RWPE1 (cell line): ENCODE measurements at regions of chr9 and their contacts with region 1.

Region 1: DNA sequence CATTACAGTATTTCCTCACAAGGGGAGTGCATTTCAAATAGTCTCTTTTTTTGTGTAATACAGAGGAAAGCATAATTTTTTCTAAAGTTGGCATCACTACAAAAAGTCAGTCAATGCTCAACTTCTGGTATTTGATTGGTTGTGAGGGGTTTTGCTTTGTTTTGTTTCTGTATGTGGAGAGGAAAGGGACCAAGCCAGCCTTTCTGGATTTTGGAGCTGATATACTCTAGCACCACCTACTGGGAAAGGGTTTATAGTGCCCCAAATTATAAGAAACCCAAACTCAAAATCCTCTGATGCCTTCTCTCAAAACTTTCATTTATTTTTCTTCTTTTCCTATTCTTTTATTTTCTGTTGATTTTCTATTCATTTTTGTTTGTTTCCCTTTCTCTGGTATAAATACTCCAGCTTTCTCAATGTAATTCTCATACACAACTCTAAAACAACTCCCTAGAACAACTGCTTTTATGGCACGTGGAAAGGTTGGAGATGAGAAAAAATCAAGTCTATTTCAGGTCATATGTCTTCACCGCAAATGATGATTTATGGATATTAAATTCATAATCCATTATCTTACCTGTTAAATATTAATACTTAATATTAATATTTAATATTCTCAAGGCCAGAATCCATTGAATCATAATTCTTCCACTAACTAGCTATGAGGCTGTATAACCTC is 69.5 kb upstream of the ANXA1 start:
- DNase-seq: peak; percentile 57
- H3K27ac ChIP-seq: no peak overlapping the region
- CTCF ChIP-seq: peak; percentile 83

Region 2: GRCh38 chr9:72856972-72857623 is 225.0 kb before region 1 on chr9:
- CTCF ChIA-PET with region 1: interaction called, 12 read pairs
- POLR2A ChIA-PET with region 1: no interaction called
- DNase-seq: peak; percentile 44
- H3K27ac ChIP-seq: no peak overlapping the region
- CTCF ChIP-seq: peak; percentile 67

Region 3: GRCh38 chr9:73011181-73011750 is 70.9 kb before region 1 on chr9:
- CTCF ChIA-PET with region 1: no interaction called
- POLR2A ChIA-PET with region 1: no interaction called
- DNase-seq: no peak
- H3K27ac ChIP-seq: no peak overlapping the region
- CTCF ChIP-seq: no peak

Region 4: DNA sequence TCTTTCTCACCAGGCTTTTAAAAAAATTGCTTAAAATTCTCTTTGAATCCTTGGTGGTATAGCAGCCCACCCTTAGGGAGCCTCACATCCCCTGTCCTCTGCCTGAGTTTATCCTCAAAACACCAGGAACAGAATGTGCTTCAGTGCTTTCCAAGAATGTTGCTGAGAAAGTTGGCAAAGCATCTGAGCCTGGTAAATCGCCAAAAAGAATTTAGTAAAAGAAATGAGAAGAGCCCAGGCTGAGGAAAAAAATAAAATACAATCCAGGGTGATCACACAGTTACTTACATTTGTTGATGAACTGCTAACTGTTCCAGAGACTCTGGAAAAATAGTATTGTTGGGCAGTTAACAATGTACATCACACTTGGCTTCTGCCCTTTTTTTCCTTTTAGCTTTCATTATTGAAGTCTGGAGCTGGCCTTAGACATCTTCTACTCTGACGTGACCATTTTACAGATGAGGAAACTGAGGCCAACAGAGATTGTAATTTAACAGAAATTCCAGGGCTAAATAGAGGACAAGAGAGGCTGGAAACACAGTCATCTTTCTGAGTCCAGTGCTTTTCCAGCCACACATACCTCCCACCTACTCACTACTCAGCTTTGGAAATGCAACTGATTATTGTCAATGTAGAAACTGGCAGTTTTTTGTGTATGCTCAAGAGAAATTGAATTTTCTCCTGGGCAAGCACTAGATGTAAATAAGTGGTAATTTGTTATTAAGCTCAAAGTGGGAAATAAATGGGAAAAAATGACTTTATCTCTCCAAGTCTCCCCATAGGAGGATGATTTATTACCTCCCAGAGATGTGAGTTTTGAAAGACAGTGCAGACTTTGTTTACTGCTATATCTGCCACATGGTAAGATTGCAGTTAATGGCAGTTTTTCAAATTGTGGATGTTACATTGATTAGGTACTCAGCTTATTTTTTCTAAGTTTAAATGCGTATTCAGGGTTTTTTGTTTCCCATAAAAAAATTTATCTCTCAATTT is 42.6 kb before region 1 on chr9:
- CTCF ChIA-PET with region 1: interaction called, 3 read pairs
- POLR2A ChIA-PET with region 1: interaction called, 12 read pairs
- DNase-seq: no peak
- H3K27ac ChIP-seq: no peak overlapping the region
- CTCF ChIP-seq: no peak